ENCODE measurements at regions of chr18 and their contacts with region 1.

Region 1: DNA sequence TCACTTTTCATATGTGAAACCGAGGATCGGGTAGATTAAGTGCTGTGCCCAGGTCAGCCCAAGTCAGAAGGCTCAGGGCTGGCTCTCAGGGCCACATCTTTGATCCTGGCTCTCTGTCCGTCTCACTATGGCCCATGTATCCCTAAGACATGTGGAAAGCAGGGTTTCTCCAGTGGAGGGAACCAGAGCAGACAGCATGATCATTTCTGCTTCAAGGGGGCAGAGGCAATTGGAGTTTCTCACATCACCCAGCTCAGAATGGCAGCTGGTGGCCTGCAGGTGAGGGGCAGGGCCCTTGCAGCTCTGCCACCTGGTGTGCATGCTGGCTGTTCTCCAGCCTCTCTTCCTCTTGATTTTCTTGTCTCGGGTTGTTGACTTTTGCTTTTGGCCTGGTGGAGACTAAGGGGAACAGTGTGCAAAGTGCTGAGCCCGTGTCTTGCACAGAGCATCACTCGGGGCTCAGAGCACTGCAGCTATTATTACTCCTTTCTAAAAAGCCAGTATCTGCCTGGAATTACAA is 27.0 kb downstream of the LDLRAD4 start:
- DNase-seq: no peak
- ATAC-seq: no peak
- H3K4me3 ChIP-seq: no peak overlapping the region
- H3K27ac ChIP-seq: no peak overlapping the region
- H3K4me1 ChIP-seq: no peaks in the 10 kb centered on the region
- H3K27me3 ChIP-seq: no peaks in the 10 kb centered on the region; a peak in 2 of 4 replicates
- CTCF ChIP-seq: no peak
- EP300 ChIP-seq: no peak
- POLR2A ChIP-seq: no peak
- RAD21 ChIP-seq: no peak

Region 2: GRCh38 chr18:13019301-13019700 is 226.2 kb before region 1 on chr18:
- CTCF ChIA-PET with region 1: no interaction called
- POLR2A ChIA-PET with region 1: no interaction called
- RAD21 ChIA-PET with region 1: no interaction called
- SMC1A ChIA-PET with region 1: no interaction called
- in situ Hi-C with region 1: no loop called
- intact Hi-C with region 1: no loop called
- DNase-seq: peak; percentile 17
- ATAC-seq: peak; percentile 76
- H3K4me3 ChIP-seq: no peak overlapping the region
- H3K27ac ChIP-seq: no peak overlapping the region
- H3K4me1 ChIP-seq: peaks cover 4% of the 10 kb centered on the region
- H3K27me3 ChIP-seq: no peaks in the 10 kb centered on the region
- CTCF ChIP-seq: no peak
- EP300 ChIP-seq: peak in 1 of 2 experiments; percentile 50; a peak in 1 of 4 replicates
- POLR2A ChIP-seq: no peak
- RAD21 ChIP-seq: no peak

Region 3: DNA sequence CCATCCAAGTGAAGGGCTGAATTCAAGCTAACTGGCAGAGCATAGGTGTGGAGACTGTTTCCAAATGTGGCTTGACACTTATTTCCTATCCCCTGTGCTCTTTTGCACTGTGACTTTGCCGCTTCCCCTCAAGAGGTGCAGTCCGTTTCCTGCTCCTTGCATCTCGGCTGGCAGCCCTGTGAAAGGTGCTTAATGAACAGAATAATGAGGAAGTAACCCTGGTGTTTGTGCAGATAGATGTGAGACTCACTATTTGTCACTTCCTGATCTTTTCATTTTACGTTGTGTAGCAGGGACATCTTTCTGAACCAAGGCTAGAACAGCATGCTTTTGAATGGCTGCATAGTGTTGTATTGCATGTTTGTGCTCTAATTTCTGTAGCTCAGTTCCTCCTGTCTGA is 193.6 kb before region 1 on chr18:
- CTCF ChIA-PET with region 1: no interaction called
- POLR2A ChIA-PET with region 1: no interaction called
- RAD21 ChIA-PET with region 1: no interaction called
- SMC1A ChIA-PET with region 1: no interaction called
- in situ Hi-C with region 1: no loop called
- intact Hi-C with region 1: no loop called
- DNase-seq: peak; percentile 17
- ATAC-seq: peak; percentile 67
- H3K4me3 ChIP-seq: no peak overlapping the region
- H3K27ac ChIP-seq: no peak overlapping the region
- H3K4me1 ChIP-seq: no peaks in the 10 kb centered on the region
- H3K27me3 ChIP-seq: no peaks in the 10 kb centered on the region
- CTCF ChIP-seq: no peak
- EP300 ChIP-seq: no peak
- POLR2A ChIP-seq: no peak
- RAD21 ChIP-seq: no peak

Region 4: GRCh38 chr18:13198706-13199105 is 46.8 kb before region 1 on chr18:
- CTCF ChIA-PET with region 1: no interaction called
- POLR2A ChIA-PET with region 1: no interaction called
- RAD21 ChIA-PET with region 1: no interaction called
- SMC1A ChIA-PET with region 1: no interaction called
- in situ Hi-C with region 1: loop called (anchors 5 kb)
- intact Hi-C with region 1: no loop called
- DNase-seq: no peak
- ATAC-seq: no peak
- H3K4me3 ChIP-seq: no peak overlapping the region
- H3K27ac ChIP-seq: no peak overlapping the region
- H3K4me1 ChIP-seq: no peaks in the 10 kb centered on the region
- H3K27me3 ChIP-seq: no peaks in the 10 kb centered on the region
- CTCF ChIP-seq: no peak
- EP300 ChIP-seq: no peak
- POLR2A ChIP-seq: no peak
- RAD21 ChIP-seq: no peak

Region 5: DNA sequence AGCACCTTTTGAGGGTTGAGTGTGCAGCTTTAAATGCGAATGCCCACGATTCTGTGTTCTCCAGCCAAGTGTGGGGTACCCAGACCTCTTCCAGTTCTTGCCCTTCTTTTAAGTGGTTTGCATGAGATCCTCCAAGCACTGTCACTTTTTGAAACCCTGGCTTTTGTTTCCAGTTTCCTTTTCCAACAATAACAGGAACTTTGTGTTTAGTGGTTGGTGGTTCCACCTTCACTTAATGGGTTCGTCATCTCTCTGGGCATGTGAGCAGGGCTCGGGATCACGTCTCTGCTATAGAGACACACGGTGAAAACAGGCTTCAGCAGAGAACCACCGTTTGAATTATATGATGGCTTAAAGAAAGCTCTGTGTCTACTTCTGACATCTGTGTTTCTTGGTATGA is 170.7 kb after region 1 on chr18:
- CTCF ChIA-PET with region 1: no interaction called
- POLR2A ChIA-PET with region 1: no interaction called
- RAD21 ChIA-PET with region 1: no interaction called
- SMC1A ChIA-PET with region 1: no interaction called
- in situ Hi-C with region 1: no loop called
- intact Hi-C with region 1: loop called (anchors 10 kb)
- DNase-seq: no peak
- ATAC-seq: no peak
- H3K4me3 ChIP-seq: no peak overlapping the region
- H3K27ac ChIP-seq: no peak overlapping the region
- H3K4me1 ChIP-seq: no peaks in the 10 kb centered on the region
- H3K27me3 ChIP-seq: no peaks in the 10 kb centered on the region; a peak in 2 of 4 replicates
- CTCF ChIP-seq: no peak
- EP300 ChIP-seq: no peak
- POLR2A ChIP-seq: no peak
- RAD21 ChIP-seq: no peak

Measured in GM12878 (cell line).